CD14-positive monocyte (primary cell): ENCODE measurements at regions of chr1 and their contacts with region 1.

Region 1: DNA sequence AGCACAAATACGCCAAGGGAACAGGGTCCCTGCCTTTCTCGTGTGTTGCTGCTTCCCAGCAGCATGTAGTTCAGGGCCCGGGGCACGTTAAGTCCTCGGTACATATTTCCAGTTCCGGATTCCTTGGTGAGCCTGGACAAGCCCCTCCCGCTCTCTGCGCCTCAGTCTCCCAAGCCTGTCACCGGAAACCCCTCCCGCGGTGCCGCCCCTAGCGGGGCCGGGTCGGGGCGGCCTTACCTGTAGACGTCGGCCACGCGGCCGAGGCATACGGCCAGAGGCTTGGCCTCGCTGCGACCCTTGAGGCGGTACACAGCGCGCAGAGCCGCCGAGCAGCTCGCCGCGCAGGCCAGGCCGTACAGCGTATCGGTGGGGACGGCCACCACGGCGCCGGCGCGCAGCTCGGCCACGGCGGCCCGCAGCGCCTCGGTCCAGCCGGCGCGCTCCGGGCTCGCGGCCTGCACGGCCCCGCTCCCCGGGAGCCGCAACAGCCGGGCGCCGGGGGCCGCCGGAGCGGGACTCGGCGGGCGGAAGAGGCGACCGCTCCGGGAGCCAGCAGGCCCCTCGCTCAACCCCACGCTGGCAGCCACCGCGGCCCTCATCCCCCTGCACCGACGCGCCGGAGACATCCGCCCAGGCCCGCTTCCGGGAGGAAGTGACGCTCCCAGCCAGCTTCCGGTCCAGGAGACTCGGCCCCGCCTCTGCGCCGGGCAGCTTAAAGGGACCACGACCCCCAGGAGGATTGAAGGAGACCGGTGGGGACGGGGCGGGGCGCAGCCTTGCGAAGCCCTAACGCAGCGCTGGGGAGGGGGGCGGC is at the starts of genes C1orf122 and YRDC:
- DNase-seq: peak; percentile 80 to 88 (median 87)
- H3K4me3 ChIP-seq: peak within 1 kb of the TSS; percentile 56 to 94 (median 92)
- H3K4me3 Mint-ChIP-seq: peak within 1 kb of the TSS; percentile 85 to 92
- H3K27ac ChIP-seq: peak within 1 kb of the TSS; percentile 61 to 95
- H3K27ac Mint-ChIP-seq: peak within 1 kb of the TSS; percentile 92 to 98 (median 97)
- H3K4me1 ChIP-seq: peaks cover 18 to 45% of the 10 kb centered on the region in 2 donors
- H3K4me1 Mint-ChIP-seq: peaks cover 39% of the 10 kb centered on the region
- H3K27me3 ChIP-seq: no peaks in the 10 kb centered on the region
- H3K27me3 Mint-ChIP-seq: no peaks in the 10 kb centered on the region
- CTCF ChIP-seq: no peak
- polyA plus RNA-seq, gene C1orf122: 15.5 to 29.5 (median 22.9) TPM
- polyA plus RNA-seq, gene YRDC: 10.4 to 29.6 (median 13.3) TPM

Region 2: DNA sequence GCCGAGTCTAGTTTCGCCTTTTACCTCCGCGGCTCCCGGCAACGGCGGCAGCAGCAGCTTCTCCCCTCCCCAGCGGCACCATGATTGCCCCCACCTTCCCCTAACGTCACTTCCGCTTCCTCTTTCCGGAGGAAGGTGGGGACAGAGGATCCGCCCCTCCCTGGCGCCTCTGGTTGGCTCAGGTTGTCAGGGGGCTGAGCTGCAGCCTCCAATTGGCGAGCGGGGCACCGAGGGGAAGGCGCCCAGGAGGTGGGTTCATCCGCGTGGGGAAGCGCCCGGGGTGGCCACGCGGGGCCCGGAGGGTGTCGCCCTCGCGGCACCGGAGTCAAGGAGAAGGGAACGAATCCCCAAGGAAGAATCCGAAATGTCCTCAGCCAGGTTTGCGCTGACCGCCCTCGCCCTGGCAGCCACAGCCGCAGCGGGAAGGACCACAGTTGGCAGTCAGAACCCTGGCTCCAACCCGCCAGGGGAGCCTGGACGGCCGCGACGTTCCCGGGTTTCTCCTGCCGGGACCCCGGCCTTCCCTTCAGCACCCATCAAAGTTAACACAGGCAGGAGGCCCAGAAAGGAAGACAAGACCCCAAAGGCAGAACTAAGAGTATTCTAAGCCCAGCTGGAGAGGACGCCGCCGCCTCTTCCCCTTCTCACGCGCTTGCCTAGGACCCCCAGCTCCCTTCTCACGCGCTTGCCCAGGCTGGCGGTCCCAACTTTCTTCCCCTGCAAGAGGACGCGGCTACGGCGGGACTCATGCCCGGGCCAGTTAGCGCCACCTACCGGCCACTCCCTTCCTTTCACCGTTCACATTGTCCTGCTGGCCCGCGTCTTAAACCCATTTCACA is 52.0 kb after region 1 on chr1 and contains the start of gene MTF1:
- intact Hi-C with region 1: loop called (anchors 1 to 2 kb)
- DNase-seq: peak; percentile 97 to 99 (median 99)
- H3K4me3 ChIP-seq: peak within 1 kb of the TSS; percentile 74 to 97 (median 95)
- H3K4me3 Mint-ChIP-seq: peak within 1 kb of the TSS; percentile 95
- H3K27ac ChIP-seq: peak within 1 kb of the TSS; percentile 88 to 99
- H3K27ac Mint-ChIP-seq: peak within 1 kb of the TSS; percentile 97 to 99 (median 98)
- H3K4me1 ChIP-seq: peaks cover 45 to 54% of the 10 kb centered on the region in 2 donors
- H3K4me1 Mint-ChIP-seq: peaks cover 44% of the 10 kb centered on the region
- H3K27me3 ChIP-seq: no peaks in the 10 kb centered on the region
- H3K27me3 Mint-ChIP-seq: no peaks in the 10 kb centered on the region
- CTCF ChIP-seq: peak; percentile 92
- polyA plus RNA-seq, gene MTF1: 17.1 to 41.0 (median 29.6) TPM

Region 3: GRCh38 chr1:37989361-37989930 is 181.7 kb after region 1 on chr1:
- intact Hi-C with region 1: loop called in 1 of 2 experiments (anchors 10 kb)
- DNase-seq: peak; percentile 57 to 85 (median 76)
- H3K4me3 ChIP-seq: peak overlapping the region; percentile 48 to 91 (median 84)
- H3K4me3 Mint-ChIP-seq: peak overlapping the region; percentile 94 to 99
- H3K27ac ChIP-seq: peak overlapping the region; percentile 63 to 83
- H3K27ac Mint-ChIP-seq: peak overlapping the region; percentile 86 to 96 (median 93)
- H3K4me1 ChIP-seq: peaks cover 16 to 23% of the 10 kb centered on the region in 2 donors
- H3K4me1 Mint-ChIP-seq: peaks cover 20% of the 10 kb centered on the region
- H3K27me3 ChIP-seq: no peaks in the 10 kb centered on the region
- H3K27me3 Mint-ChIP-seq: peaks cover 0 to 3% (median 1%) of the 10 kb centered on the region in 3 donors
- CTCF ChIP-seq: no peak

Region 4: DNA sequence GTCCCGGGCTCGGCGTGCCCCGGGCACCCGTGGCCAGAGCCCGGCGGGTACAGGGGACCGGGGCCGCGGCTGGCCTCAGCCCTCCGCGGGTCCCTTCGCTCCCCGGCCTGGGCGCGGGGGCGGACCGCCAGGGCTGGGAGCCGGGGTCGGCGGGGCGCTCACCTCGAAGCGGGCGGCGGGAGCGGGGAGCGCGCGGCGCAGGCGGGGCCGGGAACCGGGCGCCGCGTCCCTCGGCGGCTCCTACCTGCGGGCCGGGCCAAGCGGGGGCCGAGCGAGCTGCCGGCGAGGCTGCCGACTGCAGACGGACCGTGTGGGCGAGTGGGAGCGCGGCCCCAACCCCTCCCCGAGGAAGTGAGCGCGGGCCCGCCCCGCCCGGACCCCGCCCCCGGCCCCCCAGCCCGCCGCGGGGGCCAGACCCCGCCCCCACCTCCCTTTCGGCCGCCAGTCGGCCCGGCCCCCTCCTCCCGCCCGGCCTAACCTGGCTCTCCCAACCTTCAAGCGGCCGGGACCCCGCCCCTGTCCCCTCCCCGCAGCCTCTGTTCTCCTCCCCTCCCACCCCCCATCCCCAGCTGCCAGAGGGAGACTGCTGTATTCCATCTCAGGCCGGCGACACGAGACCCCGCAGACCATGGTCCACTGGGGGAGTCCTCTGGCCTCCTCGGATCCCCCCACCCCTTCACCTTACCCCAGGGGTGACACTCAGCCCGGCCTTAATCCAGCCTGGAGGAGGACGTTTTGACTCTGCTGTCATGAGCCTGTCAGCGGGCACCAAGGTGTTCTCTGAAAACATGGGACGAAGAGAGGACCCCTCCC is 197.6 kb after region 1 on chr1 and contains the start of gene FHL3:
- intact Hi-C with region 1: loop called in 1 of 2 experiments (anchors 10 kb)
- DNase-seq: peak in 1 of 3 donors; percentile 32
- H3K4me3 ChIP-seq: peak within 1 kb of the TSS; percentile 68 to 90 (median 76)
- H3K4me3 Mint-ChIP-seq: peak within 1 kb of the TSS; percentile 96 to 99
- H3K27ac ChIP-seq: peak within 1 kb of the TSS; percentile 31 to 83
- H3K27ac Mint-ChIP-seq: peak within 1 kb of the TSS; percentile 38 to 92 (median 87)
- H3K4me1 ChIP-seq: peaks cover 65 to 78% of the 10 kb centered on the region in 2 donors
- H3K4me1 Mint-ChIP-seq: peaks cover 71% of the 10 kb centered on the region
- H3K27me3 ChIP-seq: no peaks in the 10 kb centered on the region
- H3K27me3 Mint-ChIP-seq: no peaks in the 10 kb centered on the region
- CTCF ChIP-seq: no peak
- polyA plus RNA-seq, gene FHL3: 24.7 to 32.3 (median 26.1) TPM

Region 5: DNA sequence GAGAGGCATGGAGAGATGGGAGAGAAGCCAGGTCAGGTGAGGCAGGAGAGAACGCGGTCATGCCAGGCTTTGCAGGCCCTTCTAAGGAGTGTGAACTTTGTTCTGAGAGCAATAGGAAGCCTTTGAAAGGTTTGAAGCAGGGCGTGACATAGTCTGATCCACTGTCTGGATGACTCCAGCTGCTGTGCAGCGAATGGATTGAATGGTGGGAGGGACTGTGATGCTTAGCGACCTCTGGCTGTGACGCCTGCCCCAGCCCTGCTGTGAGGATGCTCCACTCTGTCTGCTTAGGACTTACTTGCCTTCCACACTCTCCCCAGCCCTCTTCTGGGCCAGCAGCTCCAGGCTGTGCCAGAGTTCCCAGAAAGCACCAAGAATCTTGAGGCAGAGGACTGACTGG is 280.6 kb after region 1 on chr1:
- intact Hi-C with region 1: no loop called
- DNase-seq: no peak
- H3K4me3 ChIP-seq: no peak overlapping the region
- H3K4me3 Mint-ChIP-seq: no peak overlapping the region
- H3K27ac ChIP-seq: no peak overlapping the region
- H3K27ac Mint-ChIP-seq: no peak overlapping the region
- H3K4me1 ChIP-seq: no peaks in the 10 kb centered on the region
- H3K4me1 Mint-ChIP-seq: peaks cover 3% of the 10 kb centered on the region
- H3K27me3 ChIP-seq: no peaks in the 10 kb centered on the region
- H3K27me3 Mint-ChIP-seq: peaks cover under 1 to 6% (median 5%) of the 10 kb centered on the region in 3 donors
- CTCF ChIP-seq: no peak